ENCODE measurements at regions of chr13 and their contacts with region 1.

Region 1: GRCh38 chr13:48975856-48976575 is at the start of gene FNDC3A:
- DNase-seq: peak; percentile 88
- ATAC-seq: peak; percentile 92 to 94
- total RNA-seq, gene FNDC3A: 22.0 to 35.8 TPM

Region 2: DNA sequence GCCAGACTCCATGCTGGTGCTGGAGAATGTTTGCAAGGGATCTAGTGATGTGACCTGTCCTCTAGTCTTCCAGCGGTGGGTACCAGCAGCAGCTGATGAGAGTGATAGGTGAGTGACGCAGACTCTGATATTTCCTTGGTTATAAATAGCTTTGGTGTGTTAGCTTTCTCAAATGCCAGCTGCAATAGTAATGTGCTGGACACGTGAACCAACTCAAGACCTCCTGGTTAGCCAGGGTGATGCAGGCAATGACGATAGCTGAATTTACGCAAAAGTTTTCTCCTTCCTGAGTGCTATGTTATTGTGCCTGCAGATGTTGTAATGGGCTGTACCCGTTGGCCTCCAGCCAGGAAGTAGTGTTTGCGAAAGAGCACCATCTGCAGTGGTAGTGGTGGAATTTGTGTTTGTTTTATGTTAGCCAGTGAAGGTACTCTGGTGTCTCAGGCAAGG is 192.8 kb before region 1 on chr13:
- intact Hi-C with region 1: loop called in 1 of 2 experiments (anchors 5 kb)
- DNase-seq: peak; percentile 84
- ATAC-seq: peak; percentile 79 to 85

Region 3: DNA sequence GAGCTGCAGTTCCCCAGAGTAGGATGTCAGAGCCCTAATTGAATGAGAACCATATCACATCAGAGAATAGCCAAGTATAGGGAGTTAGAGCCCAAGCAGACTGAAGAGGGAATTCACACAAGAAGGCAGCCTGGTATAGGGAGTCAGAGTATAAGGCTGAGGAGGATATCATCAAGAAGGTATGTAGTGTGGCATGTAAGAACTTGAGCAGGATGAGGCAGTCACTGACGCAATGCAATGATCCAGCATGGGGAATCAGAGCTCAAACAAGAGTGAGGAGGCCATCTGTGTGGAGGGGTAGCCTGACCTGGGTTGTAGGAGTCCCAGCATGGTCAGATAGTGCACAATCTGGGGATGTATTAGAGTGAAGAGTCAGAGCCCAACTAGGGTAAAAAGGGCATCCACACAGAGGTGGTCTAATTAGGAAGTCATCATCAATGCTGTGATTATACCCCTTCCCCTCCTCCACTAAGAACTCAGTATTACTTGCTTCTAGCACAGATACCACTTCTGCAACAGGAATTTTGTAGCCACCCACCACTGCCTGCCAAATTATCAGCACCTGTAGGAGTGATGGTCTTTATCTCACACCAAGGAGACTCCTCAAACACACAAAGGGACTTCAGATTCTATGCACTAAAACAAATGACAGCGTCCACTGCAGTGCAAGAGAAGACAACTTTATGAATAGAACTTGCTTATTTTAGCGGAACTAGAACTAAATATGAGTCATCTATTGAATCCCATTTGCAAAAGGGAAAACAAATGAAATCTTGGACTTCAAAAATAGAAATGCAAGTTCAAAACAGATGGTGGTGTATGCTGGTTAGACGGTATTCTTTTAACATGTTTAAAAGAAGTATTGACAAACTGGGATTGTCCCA is 106.9 kb after region 1 on chr13:
- intact Hi-C with region 1: no loop called
- DNase-seq: no peak
- ATAC-seq: peak in 1 of 2 donors; percentile 73

Region 4: DNA sequence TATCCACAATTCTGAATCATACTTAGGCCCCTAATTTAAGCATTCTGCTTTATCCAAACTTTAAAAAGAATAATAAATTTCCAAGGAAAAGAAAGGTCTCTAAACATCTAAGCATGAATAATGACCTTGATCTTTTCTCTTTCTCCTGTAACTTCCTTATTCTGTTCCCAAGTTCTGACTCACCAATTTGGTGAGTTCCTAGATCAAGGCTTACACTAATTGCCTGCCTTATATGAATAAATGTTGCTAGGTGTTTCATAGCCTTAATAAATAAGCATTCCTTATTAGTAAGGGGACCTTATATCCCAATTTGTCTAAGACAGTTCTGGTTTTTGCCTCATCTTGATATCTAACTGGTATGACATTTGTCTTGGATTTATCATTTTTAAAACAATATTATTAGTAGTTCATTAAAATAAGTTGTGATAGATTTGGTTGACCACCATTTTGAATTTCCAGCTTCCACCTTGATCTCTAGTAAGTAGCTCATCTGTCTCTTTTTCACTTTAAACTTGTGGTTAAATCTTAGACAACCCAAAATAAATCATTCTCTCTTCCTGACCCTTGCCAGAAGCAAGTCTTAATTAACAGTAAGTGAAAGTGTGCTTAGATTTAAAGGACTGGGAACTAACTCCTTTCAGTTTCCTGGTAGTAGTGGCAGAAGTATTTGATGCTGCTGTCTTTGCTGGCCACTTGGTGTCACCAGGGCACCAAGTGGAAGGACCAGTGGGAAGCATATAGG is 122.9 kb after region 1 on chr13:
- intact Hi-C with region 1: loop called in 1 of 2 experiments (anchors 10 kb)
- DNase-seq: no peak
- ATAC-seq: peak in 1 of 2 donors; percentile 43

Region 5: GRCh38 chr13:49443704-49444523 is 467.9 kb after region 1 on chr13 and contains the starts of genes CAB39L and SETDB2:
- intact Hi-C with region 1: loop called in 1 of 2 experiments (anchors 10 kb)
- DNase-seq: peak; percentile 100
- ATAC-seq: peak; percentile 98 to 99
- total RNA-seq, gene CAB39L: 16.4 to 20.2 TPM
- total RNA-seq, gene SETDB2: 12.8 to 13.5 TPM

Measured in left cardiac atrium (tissue), 4 donors.